Adrenal gland (tissue), 19 donors: ENCODE measurements at regions of chr3 and their contacts with region 1.

Region 1: DNA sequence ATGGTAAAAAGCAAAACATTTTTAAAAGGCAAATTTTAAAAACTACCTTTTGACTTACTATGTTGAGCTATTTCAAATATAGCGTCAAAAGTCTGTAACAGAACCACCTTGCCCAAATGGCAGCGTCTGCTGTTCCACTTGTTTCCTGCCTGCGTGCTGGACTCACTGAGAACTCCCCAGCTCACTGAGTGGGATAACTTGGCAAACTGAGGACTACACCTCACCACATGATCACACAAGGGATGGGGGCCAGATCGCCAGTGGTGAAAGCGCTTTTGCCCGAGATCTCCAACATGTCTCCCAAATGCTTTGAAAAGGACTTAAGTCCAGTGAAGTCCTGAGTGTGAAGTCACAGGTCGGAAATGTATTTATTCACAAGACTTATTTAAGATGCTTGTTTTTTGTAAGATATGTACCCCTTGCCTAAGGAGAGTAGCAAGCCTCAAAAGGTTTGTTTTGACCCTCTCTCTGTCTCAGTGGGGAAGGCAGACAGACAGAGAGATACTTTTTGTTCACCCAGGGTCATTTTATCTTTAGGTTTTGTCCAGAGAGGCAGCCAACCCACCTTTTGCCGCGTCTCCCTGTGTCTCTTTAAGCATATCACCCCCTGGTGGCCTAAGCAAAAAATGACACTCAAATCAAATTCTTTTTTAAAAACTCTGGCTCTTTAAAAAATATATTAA is 192.6 kb downstream of the PDZRN3 start:
- DNase-seq: peak in 4 of 7 donors; percentile 27 to 51 (median 45)
- H3K4me3 ChIP-seq: no peak overlapping the region
- H3K27ac ChIP-seq: no peak overlapping the region
- H3K4me1 ChIP-seq: peaks cover 0 to 23% of the 10 kb centered on the region in 2 donors
- H3K27me3 ChIP-seq: no peaks in the 10 kb centered on the region
- CTCF ChIP-seq: peak; percentile 57 to 73 (median 63)
- POLR2A ChIP-seq: no peak

Region 2: GRCh38 chr3:73100741-73101559 is 331.2 kb before region 1 on chr3:
- intact Hi-C with region 1: loop called (anchors 2 to 5 kb)
- DNase-seq: peak; percentile 78 to 96 (median 88)
- H3K4me3 ChIP-seq: no peak overlapping the region
- H3K27ac ChIP-seq: no peak overlapping the region
- H3K4me1 ChIP-seq: no peaks in the 10 kb centered on the region
- H3K27me3 ChIP-seq: no peaks in the 10 kb centered on the region
- CTCF ChIP-seq: peak; percentile 89 to 97 (median 92)
- POLR2A ChIP-seq: no peak